ENCODE measurements at regions of chr9 and their contacts with region 1.

Region 1: GRCh38 chr9:75946726-75947125 is 56.3 kb downstream of the PCSK5 start:
- DNase-seq: no peak
- ATAC-seq: no peak
- H3K4me3 ChIP-seq: no peak overlapping the region
- H3K27ac ChIP-seq: no peak overlapping the region
- H3K4me1 ChIP-seq: no peaks in the 10 kb centered on the region
- H3K27me3 ChIP-seq: no peaks in the 10 kb centered on the region
- CTCF ChIP-seq: no peak
- POLR2A ChIP-seq: no peak

Region 2: GRCh38 chr9:75896193-75896592 is 50.5 kb before region 1 on chr9:
- intact Hi-C with region 1: loop called in 1 of 10 experiments (anchors 5 kb)
- DNase-seq: peak in 1 of 5 donors; percentile 16
- ATAC-seq: peak in 3 of 4 donors; percentile 23 to 66 (median 53)
- H3K4me3 ChIP-seq: no peak overlapping the region
- H3K27ac ChIP-seq: no peak overlapping the region
- H3K4me1 ChIP-seq: peaks cover 0 to 38% (median 16%) of the 10 kb centered on the region in 12 donors
- H3K27me3 ChIP-seq: peaks cover 0 to 10% (median 0%) of the 10 kb centered on the region in 9 donors
- CTCF ChIP-seq: no peak
- POLR2A ChIP-seq: no peak